HAP-1 (cell line): ENCODE measurements at regions of chr5 and their contacts with region 1.

Region 1: DNA sequence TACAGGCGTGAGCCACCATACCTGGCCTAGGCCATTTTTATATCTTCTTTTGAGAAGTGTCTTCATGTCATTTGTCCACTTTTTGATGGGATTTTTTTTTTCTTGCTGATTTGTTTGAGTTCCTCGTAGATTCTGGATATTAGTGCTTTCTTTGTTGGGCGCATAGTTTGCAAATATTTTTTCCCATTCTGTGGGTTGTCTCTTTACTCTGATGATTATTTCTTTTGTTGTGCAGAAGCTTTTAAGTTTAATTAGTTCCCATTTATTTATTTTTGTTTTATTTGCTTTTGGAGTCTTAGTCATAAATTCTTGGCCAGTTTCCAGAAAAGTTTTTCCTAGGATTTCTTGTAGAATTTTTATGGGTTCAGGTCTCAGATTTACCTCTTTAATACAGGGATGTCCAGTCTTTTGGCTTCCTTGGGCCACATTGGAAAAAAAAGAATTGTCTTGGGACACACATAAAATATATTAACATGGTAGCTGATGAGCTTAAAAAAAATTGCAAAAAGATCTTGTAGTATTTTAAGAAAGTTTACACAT is 122.0 kb downstream of the WDR70 start:
- DNase-seq: no peak
- H3K4me3 ChIP-seq: no peak overlapping the region
- H3K4me1 ChIP-seq: no peaks in the 10 kb centered on the region
- H3K27me3 ChIP-seq: no peaks in the 10 kb centered on the region

Region 2: DNA sequence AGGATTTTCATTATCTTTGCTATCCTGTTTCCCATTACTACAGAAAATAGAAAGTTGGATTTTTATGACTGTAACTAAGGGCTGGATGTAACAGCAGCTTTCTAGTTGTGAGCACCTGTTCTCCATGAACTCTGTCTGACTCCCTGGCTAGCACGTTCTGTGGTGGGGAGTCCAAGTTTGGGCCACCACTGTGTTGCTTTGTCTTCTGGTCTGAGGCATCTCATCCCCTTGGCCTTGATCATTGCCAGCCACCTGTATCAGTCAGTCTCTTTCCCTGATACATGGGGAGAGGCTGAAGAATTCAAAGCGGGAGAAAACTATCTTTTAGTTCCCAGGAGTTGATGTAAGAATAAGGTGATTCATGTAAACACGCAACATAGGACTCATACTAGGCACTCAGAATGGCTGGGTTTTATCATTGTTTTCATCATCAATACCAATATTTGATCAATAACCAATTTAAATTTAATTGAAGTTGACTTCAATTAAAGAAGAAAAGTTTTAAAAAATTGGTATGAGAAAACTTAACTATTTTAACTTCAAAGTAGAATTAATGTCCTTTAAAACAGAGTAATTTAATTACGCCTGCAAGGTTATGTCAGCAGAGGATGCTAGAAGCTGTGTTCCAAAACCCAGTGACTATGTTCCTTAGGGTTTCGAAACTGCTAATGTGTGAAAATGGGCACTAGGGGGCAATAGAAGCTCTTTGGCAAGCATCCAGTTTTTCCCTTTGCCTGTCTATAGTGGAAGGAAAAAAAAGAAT is 88.4 kb before region 1 on chr5:
- in situ Hi-C with region 1: loop called (anchors 25 kb)
- DNase-seq: peak; percentile 71 to 77
- H3K4me3 ChIP-seq: no peak overlapping the region
- H3K4me1 ChIP-seq: no peaks in the 10 kb centered on the region
- H3K27me3 ChIP-seq: no peaks in the 10 kb centered on the region